Activated CD4-positive, alpha-beta T cell treated with anti-CD3 and anti-CD28 coated beads for 36 hours (primary cell): ENCODE measurements at regions of chr4 and their contacts with region 1.

Region 1: GRCh38 chr4:15577508-15577907 is 77.6 kb downstream of the FBXL5 start:
- DNase-seq: no peak
- ATAC-seq: no peak
- H3K4me3 Mint-ChIP-seq: no peak overlapping the region
- H3K27ac Mint-ChIP-seq: no peak overlapping the region
- H3K4me1 Mint-ChIP-seq: peaks cover 3% of the 10 kb centered on the region
- H3K27me3 Mint-ChIP-seq: no peaks in the 10 kb centered on the region

Region 2: DNA sequence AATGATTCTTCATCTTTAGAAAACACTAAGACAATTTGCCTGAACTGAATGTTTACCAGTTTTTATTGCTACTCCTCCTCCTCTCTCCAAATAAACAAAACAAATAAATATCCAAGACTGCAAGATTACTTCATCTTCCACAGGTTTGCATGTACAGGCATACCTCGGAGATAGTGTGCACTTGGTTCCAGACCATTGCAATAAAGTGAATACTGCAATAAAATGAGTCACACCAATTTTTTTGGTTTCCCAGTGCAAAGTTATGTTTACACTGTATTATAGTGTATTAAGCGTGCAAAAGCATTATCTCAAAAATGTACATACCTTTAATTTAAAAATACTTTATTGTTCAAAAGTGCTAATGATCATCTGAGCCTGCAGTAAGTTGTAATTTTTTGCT is 24.4 kb after region 1 on chr4:
- CTCF ChIA-PET with region 1: no interaction called
- POLR2A ChIA-PET with region 1: no interaction called
- intact Hi-C with region 1: loop called in 1 of 2 experiments (anchors 1 kb)
- DNase-seq: no peak
- ATAC-seq: no peak
- H3K4me3 Mint-ChIP-seq: no peak overlapping the region
- H3K27ac Mint-ChIP-seq: no peak overlapping the region
- H3K4me1 Mint-ChIP-seq: peaks cover 3% of the 10 kb centered on the region
- H3K27me3 Mint-ChIP-seq: no peaks in the 10 kb centered on the region

Region 3: GRCh38 chr4:15681207-15682015 is 103.9 kb after region 1 on chr4 and contains the start of gene FAM200B:
- CTCF ChIA-PET with region 1: no interaction called
- POLR2A ChIA-PET with region 1: no interaction called
- intact Hi-C with region 1: no loop called
- DNase-seq: peak; percentile 99
- ATAC-seq: peak; percentile 98
- H3K4me3 Mint-ChIP-seq: peak within 1 kb of the TSS; percentile 98
- H3K27ac Mint-ChIP-seq: peak within 1 kb of the TSS; percentile 96
- H3K4me1 Mint-ChIP-seq: peaks cover 39% of the 10 kb centered on the region
- H3K27me3 Mint-ChIP-seq: no peaks in the 10 kb centered on the region
- total RNA-seq, gene FAM200B: 9.8 to 13.3 TPM